Lower leg skin (tissue), 4 donors: ENCODE measurements at regions of chr19 and their contacts with region 1.

Region 1: DNA sequence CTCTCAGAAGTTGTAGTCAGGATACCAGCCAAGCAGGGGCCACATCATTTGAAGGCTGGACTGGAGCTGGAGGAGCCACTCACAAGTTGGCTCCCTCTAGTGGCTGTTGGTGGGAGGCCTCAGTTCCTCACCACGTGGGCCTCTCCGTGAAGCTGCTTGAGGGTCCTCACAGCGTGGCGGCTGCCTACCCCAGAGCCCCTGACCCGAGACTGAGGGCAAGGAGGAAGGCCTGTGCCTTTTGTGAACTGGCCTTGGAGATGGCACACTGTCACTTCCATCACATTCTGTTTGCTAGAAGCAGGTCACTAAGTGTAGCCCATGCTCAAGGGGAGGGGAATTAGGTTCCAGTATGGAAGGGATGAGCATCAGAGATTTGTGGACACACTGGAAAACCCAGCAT is 14.6 kb downstream of the GNA11 start:
- DNase-seq: no peak
- H3K4me3 ChIP-seq: no peak overlapping the region
- CTCF ChIP-seq: peak in 1 of 3 donors; percentile 53
- POLR2A ChIP-seq: no peak

Region 2: DNA sequence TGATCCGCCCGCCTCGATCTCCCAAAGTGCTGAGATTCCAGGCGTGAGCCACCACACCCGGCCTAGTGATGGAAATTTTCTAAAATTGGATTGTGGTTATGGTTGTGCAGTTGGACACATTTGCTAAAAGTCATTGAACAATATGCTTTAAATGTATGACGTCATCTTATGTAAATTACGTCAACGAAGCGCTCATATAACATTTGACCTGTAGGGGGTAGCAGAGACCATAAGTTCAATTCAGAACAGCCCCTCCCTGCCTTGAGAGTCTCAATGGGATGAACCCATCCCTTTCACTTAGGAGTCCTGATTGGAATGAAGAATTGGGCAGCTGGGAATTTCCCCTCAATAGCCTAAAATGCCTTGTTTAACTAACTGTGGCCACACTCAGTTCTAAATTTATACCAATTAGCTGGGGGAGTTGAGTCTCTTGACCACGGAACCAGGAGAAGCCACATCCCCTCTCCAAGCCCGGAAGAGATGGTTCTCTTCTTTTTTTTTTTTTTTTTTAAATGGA is 146.7 kb before region 1 on chr19:
- intact Hi-C with region 1: loop called (anchors 10 kb)
- DNase-seq: peak in 1 of 2 donors; percentile 83
- H3K4me3 ChIP-seq: no peak overlapping the region
- CTCF ChIP-seq: peak in 1 of 3 donors; percentile 61
- POLR2A ChIP-seq: no peak

Region 3: DNA sequence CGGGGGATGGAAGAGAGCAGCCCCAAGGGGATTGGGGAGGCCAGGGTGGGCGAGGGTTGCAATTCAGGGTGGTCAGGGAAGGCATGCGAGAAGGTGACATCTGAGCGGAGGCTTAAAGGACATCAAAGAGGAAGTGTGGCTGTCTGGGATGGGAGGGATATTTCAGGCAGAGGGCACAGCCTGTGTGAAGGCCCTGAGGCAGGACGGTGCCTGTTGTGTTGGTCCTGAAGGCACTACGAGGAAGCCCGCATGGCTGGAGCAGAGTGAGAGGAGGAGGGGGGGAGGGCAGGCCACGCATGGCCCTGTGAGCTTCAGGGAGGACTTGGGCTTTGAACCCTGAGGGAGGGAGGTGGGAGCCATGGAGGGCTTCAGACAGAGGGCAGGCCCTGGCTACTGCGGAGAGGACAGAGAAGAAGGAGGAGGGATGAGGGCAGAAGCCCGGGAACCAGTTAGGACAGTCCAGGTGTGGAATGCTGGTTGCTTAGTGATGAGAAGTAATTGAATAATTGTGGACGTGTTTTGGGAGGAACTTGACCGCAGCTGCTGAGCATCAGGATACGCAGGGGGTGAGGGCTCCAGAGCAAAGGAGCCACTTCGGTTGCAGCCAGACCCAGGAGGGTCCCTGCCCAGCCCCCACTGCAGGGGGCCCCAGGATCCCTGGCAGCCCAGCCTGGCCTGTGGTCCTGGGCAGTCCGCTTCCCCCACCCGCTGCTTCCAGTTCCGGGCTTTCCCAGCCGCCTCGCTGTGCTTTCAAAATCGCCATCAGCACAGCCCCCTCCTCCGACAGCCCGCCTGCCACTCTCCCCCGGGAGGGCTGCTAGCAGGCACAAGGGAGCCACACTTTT is 125.2 kb before region 1 on chr19:
- intact Hi-C with region 1: no loop called
- DNase-seq: peak in 1 of 2 donors; percentile 94
- H3K4me3 ChIP-seq: no peak overlapping the region
- CTCF ChIP-seq: no peak
- POLR2A ChIP-seq: no peak